ENCODE measurements at regions of chr3 and their contacts with region 1.

Region 1: DNA sequence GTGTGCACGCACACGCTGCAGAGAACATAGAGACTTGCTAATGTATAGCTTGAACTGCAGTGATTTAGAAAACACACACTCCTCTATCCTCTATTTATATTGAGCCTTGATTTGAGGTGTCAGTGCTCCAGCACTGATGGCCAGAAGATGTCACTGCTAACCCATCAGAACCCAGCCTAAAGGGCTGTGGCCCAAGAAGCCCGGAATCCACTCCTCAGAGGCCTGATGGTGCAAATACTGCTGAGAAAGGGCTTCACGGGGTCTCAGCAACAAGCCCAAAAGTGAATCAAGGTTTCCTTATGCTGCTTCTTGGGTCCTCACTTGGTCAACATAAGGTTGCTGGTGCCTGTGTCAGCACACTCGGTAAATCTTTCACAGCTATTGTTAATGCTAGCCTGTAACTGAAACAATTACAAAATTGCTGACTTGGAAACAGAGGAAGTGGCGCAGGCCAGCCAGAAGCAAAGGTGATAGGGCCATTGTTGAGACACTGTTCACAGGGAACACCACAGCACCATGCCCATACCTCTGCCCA is 60.3 kb downstream of the HEG1 start:
- H3K4me3 Mint-ChIP-seq: no peak overlapping the region
- H3K27ac Mint-ChIP-seq: peak overlapping the region; percentile 70
- H3K4me1 Mint-ChIP-seq: peaks cover 19% of the 10 kb centered on the region
- H3K27me3 Mint-ChIP-seq: no peaks in the 10 kb centered on the region

Region 2: DNA sequence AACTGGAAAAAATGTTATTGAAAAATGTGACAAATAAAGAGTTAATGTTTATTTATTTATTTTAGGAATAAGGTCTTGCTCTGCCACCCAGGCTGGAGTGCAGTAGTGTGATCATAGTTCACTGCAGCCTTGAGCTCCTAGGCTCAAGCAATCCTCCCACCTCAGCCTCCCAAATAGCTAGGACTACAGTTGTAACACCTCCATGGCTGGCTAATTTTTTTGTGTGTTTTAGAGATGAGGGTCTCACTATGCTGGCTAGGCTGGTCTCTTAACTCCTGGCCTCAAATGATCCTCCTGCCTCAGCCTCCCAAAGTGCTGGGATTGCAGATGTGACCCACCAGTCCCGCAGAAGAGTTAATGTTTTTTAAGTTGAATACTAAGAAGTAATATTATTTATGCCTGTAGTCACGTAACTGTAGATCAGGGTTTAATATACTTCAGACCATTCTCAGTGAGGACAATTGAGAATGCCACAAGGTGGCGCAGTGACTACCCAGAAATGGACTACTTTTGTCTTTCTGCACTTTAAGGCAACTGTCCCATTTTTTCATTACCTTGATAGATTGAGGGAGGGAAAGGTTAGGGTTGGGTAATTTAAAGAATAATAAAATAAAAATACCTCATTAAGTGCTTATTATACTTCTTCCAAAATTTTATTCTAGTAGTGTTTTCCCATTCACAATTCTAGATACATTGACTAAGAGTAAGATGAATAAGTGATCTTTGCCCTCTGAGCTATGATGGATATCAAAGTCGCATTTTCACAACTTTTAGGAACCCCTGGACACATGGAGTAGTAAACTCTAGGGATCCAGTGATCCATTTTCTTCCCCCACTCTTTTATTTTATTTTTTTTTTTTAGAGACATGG is 67.0 kb before region 1 on chr3:
- intact Hi-C with region 1: loop called (anchors 2 kb)
- H3K4me3 Mint-ChIP-seq: no peak overlapping the region
- H3K27ac Mint-ChIP-seq: peak overlapping the region; percentile 63
- H3K4me1 Mint-ChIP-seq: peaks cover 31% of the 10 kb centered on the region
- H3K27me3 Mint-ChIP-seq: peaks cover 6% of the 10 kb centered on the region

Region 3: DNA sequence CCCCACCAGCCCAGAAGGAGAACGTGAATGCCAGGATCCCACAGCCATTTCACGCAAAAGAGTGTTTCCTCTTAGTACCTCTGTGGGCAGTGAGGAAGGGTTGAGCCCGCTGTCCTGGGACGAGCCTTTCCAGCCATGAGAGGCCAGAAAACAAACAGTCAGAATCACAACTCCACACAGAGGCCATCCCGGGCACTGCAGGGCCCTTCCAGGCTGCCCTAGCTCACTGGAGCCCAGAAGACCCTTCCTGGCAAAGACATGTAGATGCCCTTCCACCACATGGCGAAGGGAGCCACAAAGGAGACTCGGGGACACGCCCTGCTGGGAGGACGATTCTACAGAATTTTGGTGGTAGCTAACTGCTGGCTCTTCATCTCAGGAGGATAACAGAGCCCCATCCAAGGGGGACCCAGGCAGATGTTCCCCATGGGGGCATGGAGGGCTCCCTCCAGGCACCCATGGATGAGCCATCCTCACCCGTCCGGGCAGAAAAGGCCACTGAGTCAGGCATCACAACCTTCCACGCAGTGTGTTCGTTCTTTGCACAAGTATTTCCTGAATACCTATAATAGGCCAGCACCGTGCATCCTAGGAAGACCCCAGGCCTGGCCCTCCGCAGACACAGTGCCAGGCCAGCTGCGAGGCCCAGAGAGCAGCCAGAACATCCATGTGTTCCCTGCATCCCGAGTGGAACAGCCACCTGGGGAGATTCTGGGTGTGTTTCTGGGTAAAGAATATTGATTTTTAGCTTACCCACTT is 169.8 kb after region 1 on chr3:
- intact Hi-C with region 1: loop called (anchors 2 kb)
- H3K4me3 Mint-ChIP-seq: no peak overlapping the region
- H3K27ac Mint-ChIP-seq: peak overlapping the region; percentile 8
- H3K4me1 Mint-ChIP-seq: peaks cover 55% of the 10 kb centered on the region
- H3K27me3 Mint-ChIP-seq: peaks cover 6% of the 10 kb centered on the region

Region 4: GRCh38 chr3:125202197-125202596 is 206.7 kb after region 1 on chr3:
- intact Hi-C with region 1: loop called (anchors 10 kb)
- H3K4me3 Mint-ChIP-seq: no peak overlapping the region
- H3K27ac Mint-ChIP-seq: no peak overlapping the region
- H3K4me1 Mint-ChIP-seq: no peaks in the 10 kb centered on the region
- H3K27me3 Mint-ChIP-seq: peaks cover 3% of the 10 kb centered on the region

Region 5: GRCh38 chr3:125437631-125438435 is 442.3 kb after region 1 on chr3:
- intact Hi-C with region 1: loop called (anchors 1 kb)
- H3K4me3 Mint-ChIP-seq: no peak overlapping the region
- H3K27ac Mint-ChIP-seq: no peak overlapping the region
- H3K4me1 Mint-ChIP-seq: peaks cover 10% of the 10 kb centered on the region
- H3K27me3 Mint-ChIP-seq: no peaks in the 10 kb centered on the region

Measured in dendritic cell treated with granulocyte-macrophage colony-stimulating factor and Interleukin-4, amounts not matched to agents 40 ng/mL and 50 ng/mL, for 4 days (primary cell).